ENCODE measurements at regions of chr3 and their contacts with region 1.

Region 1: DNA sequence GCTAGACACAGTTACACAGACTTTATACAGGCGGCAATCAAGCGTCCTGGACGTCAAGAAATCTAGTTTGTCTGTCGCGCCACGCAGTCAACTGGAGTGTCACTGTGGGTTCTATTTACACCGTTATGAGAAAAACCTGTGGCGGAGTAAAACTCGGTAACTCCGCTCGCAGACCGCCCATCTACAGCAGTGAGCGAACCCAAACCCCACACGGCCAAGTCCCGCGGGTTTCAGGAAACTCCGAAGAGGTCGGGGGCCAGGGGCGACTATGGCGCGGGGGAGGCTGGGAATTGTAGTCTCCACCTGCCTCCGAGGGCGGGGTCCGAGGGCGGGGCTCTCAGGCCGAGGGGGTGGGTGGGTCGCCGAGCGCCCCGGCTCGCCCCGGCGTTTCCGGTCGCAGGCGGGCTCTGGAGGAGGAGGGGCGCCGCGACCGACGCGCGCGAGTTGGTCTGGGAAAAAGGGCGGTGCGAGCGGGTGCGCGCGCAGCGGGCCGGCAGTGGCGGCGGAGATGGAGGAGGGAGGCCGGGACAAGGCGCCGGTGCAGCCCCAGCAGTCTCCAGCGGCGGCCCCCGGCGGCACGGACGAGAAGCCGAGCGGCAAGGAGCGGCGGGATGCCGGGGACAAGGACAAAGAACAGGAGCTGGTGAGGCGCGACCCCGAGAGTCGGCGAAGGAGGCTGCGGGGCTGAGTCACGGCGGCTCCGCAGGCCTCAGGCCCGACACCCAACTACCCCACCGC is at the start of gene PSMD2:
- DNase-seq: peak; percentile 96
- ATAC-seq: peak; percentile 95
- H3K4me3 ChIP-seq: peak within 1 kb of the TSS; percentile 63 to 92 (median 79)
- H3K4me3 Mint-ChIP-seq: peak within 1 kb of the TSS; percentile 95
- H3K27ac ChIP-seq: peak within 1 kb of the TSS; percentile 65 to 82
- H3K27ac Mint-ChIP-seq: peak within 1 kb of the TSS; percentile 91
- H3K4me1 ChIP-seq: peaks cover 12 to 17% of the 10 kb centered on the region in 2 donors
- H3K4me1 Mint-ChIP-seq: peaks cover 22% of the 10 kb centered on the region
- H3K27me3 ChIP-seq: peaks cover 0 to 2% (median 0%) of the 10 kb centered on the region in 4 experiments
- H3K27me3 Mint-ChIP-seq: peaks cover 6% of the 10 kb centered on the region
- CTCF ChIP-seq: no peak
- total RNA-seq, gene PSMD2: 140 and 145 TPM in 2 replicates

Region 2: GRCh38 chr3:183697610-183698317 is 601.2 kb before region 1 on chr3 and contains the start of gene YEATS2:
- CTCF ChIA-PET with region 1: no interaction called
- POLR2A ChIA-PET with region 1: no interaction called
- intact Hi-C with region 1: loop called (anchors 5 kb)
- DNase-seq: peak; percentile 82
- ATAC-seq: peak; percentile 87
- H3K4me3 ChIP-seq: peak within 1 kb of the TSS; percentile 77 to 92 (median 83)
- H3K4me3 Mint-ChIP-seq: peak within 1 kb of the TSS; percentile 97
- H3K27ac ChIP-seq: peak within 1 kb of the TSS; percentile 67 to 82
- H3K27ac Mint-ChIP-seq: peak within 1 kb of the TSS; percentile 91
- H3K4me1 ChIP-seq: peaks cover 18% of the 10 kb centered on the region in 2 donors
- H3K4me1 Mint-ChIP-seq: peaks cover 32% of the 10 kb centered on the region
- H3K27me3 ChIP-seq: no peaks in the 10 kb centered on the region
- H3K27me3 Mint-ChIP-seq: no peaks in the 10 kb centered on the region
- CTCF ChIP-seq: no peak
- total RNA-seq, gene YEATS2: 26.7 and 30.6 TPM in 2 replicates

Region 3: DNA sequence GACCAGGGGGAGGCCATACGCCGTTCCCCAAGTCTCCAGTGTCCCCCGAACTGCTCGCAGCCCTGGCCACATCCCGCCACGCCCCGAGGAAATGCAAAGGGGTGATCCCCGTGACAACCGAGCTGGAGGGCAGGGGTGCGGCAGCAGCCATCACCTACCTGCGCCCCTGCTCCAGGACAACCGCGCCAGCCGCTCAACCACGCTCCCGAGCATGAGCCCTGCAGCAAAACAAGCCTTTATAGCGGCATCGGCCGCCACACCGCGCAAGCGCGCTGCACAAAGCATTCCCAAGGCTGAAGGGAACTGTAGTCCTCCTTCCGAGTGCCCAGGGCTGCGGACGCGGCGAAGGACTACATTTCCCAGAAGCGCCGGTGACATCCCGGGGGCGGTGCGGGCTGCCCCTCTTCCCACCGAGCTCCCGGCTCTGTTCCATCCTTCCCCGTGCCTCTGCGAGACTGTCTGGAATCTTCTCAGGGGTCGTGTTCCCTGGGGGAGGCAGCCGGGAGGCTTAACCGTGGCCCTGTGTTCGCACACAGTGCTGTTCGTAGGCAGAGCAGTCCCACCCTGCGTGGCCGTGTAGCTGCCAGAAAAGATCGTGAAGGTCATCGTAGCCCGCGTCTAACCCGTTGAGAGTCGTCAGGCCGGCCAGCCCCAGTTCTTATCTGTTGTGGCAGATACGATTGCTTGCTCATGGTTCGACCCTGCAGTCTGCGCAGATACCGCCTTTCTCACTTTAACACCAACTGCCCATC is 281.1 kb before region 1 on chr3 and contains the start of gene ABCC5:
- CTCF ChIA-PET with region 1: no interaction called
- POLR2A ChIA-PET with region 1: no interaction called
- intact Hi-C with region 1: loop called (anchors 5 kb)
- DNase-seq: peak; percentile 89
- ATAC-seq: peak; percentile 96
- H3K4me3 ChIP-seq: peak within 1 kb of the TSS; percentile 73 to 99 (median 93)
- H3K4me3 Mint-ChIP-seq: peak within 1 kb of the TSS; percentile 100
- H3K27ac ChIP-seq: peak within 1 kb of the TSS in 1 of 2 donors; percentile 10
- H3K27ac Mint-ChIP-seq: peak within 1 kb of the TSS; percentile 94
- H3K4me1 ChIP-seq: peaks cover 10 to 13% of the 10 kb centered on the region in 2 donors
- H3K4me1 Mint-ChIP-seq: peaks cover 20% of the 10 kb centered on the region
- H3K27me3 ChIP-seq: no peaks in the 10 kb centered on the region
- H3K27me3 Mint-ChIP-seq: peaks cover 15% of the 10 kb centered on the region
- CTCF ChIP-seq: peak; percentile 81
- total RNA-seq, gene ABCC5: 29.5 and 31.7 TPM in 2 replicates

Region 4: DNA sequence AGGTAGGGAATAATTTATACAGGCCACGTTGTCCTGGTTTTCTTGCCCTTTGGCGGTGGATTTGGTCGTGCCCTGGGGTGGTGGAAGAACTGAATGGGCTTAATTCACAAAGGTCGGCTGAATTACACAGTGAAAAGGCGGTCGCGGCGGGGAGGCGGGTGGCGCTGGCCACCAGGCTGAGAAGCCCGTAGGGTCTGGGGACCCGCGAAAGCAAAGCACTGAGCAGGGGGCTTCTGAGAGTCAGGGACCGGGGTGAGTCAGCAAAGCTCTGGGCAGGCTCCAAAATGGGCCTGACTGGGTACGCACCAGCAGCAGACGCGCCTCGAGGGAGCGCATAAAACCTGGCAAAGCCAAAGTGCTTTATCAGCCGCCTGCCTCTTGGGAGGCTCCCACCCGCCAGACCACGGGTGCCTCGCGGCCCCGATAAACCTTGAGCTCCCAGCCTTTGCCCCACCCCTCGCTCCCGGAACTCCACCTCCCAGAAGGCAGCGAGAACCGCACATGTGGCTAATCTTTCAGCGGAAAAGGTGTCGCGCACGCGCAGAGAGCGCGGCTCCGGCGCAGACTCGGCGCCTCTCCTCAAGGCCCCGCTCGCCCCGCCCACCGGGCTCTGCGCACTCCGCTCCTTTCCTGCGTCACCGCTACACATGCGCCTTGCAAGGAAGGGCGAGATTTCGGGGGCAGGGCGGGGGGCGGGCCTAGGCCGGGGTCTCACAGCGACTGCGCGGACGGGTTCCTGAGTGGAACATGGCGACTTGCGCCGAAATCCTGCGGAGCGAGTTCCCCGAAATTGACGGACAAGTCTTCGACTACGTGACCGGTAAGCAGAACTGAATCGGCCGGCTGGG is 113.2 kb before region 1 on chr3 and contains the start of gene ABCF3:
- CTCF ChIA-PET with region 1: no interaction called
- POLR2A ChIA-PET with region 1: no interaction called
- intact Hi-C with region 1: loop called (anchors 1 kb)
- DNase-seq: peak; percentile 100
- ATAC-seq: peak; percentile 94
- H3K4me3 ChIP-seq: peak within 1 kb of the TSS; percentile 70 to 100 (median 97)
- H3K4me3 Mint-ChIP-seq: peak within 1 kb of the TSS; percentile 99
- H3K27ac ChIP-seq: peak within 1 kb of the TSS; percentile 48 to 68
- H3K27ac Mint-ChIP-seq: peak within 1 kb of the TSS; percentile 94
- H3K4me1 ChIP-seq: peaks cover 17 to 21% of the 10 kb centered on the region in 2 donors
- H3K4me1 Mint-ChIP-seq: peaks cover 33% of the 10 kb centered on the region
- H3K27me3 ChIP-seq: no peaks in the 10 kb centered on the region
- H3K27me3 Mint-ChIP-seq: no peaks in the 10 kb centered on the region
- CTCF ChIP-seq: no peak
- total RNA-seq, gene ABCF3: 115 and 131 TPM in 2 replicates

Region 5: GRCh38 chr3:184235381-184236032 is 63.4 kb before region 1 on chr3:
- CTCF ChIA-PET with region 1: no interaction called
- POLR2A ChIA-PET with region 1: no interaction called
- intact Hi-C with region 1: no loop called
- DNase-seq: no peak
- ATAC-seq: no peak
- H3K4me3 ChIP-seq: no peak overlapping the region
- H3K4me3 Mint-ChIP-seq: no peak overlapping the region
- H3K27ac ChIP-seq: no peak overlapping the region
- H3K27ac Mint-ChIP-seq: no peak overlapping the region
- H3K4me1 ChIP-seq: peaks cover 0 to 10% of the 10 kb centered on the region in 2 donors
- H3K4me1 Mint-ChIP-seq: peaks cover 9% of the 10 kb centered on the region
- H3K27me3 ChIP-seq: peaks cover 0 to 40% (median 23%) of the 10 kb centered on the region in 4 experiments
- H3K27me3 Mint-ChIP-seq: peaks cover 27% of the 10 kb centered on the region
- CTCF ChIP-seq: no peak

Region 6: GRCh38 chr3:184250167-184250828 is 48.6 kb before region 1 on chr3:
- CTCF ChIA-PET with region 1: interaction called, 4 read pairs
- POLR2A ChIA-PET with region 1: no interaction called
- intact Hi-C with region 1: loop called (anchors 1 kb)
- DNase-seq: peak; percentile 92
- ATAC-seq: peak; percentile 65
- H3K4me3 ChIP-seq: peak overlapping the region; percentile 88 to 93 (median 91)
- H3K4me3 Mint-ChIP-seq: peak overlapping the region; percentile 87
- H3K27ac ChIP-seq: peak overlapping the region in 1 of 2 donors; percentile 58
- H3K27ac Mint-ChIP-seq: peak overlapping the region; percentile 78
- H3K4me1 ChIP-seq: peaks cover 5 to 17% of the 10 kb centered on the region in 2 donors
- H3K4me1 Mint-ChIP-seq: peaks cover 9% of the 10 kb centered on the region
- H3K27me3 ChIP-seq: no peaks in the 10 kb centered on the region
- H3K27me3 Mint-ChIP-seq: no peaks in the 10 kb centered on the region
- CTCF ChIP-seq: peak; percentile 94

Region 7: DNA sequence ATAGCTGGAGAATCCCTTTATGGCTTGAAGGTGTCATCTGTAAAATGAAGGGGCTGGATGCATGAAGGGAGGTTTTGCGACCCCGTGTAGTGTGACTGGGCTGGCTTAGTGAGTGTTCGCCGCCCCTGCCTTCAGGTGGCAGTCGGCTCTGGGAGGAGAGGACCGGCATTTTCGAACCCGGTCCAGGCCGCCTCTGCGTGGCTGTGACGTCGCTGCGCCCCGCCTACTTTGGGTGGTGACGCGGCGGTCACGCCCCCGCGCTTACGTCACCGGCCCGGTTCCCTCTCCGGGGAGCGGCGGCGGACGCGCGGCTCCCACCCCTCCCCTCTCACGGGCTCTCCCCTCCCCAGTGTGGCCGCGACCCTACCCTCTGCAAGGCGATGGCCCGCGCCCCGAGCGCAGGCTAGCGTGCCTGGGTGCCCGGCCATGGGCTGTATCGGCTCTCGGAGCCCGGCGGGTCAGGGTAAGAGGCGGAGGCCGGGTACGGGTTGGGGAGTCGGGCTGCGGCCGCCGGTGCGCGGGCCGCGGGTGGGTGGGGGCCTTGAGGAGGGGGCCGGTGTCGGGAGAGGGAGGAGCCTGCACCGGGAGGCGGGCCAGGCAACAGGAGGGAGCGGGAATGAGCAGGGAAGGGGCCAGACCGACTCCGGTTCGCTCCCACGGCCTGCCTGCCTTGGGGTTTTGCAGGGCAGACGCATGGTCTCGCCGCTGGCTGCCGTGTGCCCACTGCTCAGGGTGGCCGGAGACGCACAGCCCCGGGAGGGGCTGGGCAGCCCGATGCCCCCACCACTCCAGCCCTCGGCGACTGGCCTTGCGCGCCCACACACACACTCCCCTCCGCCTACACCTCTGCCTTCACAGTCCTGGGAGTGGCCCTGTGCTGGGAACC is 37.0 kb after region 1 on chr3:
- CTCF ChIA-PET with region 1: no interaction called
- POLR2A ChIA-PET with region 1: no interaction called
- intact Hi-C with region 1: loop called (anchors 2 kb)
- DNase-seq: peak; percentile 92
- ATAC-seq: peak; percentile 80
- H3K4me3 ChIP-seq: peak overlapping the region; percentile 51 to 83 (median 73)
- H3K4me3 Mint-ChIP-seq: peak overlapping the region; percentile 94
- H3K27ac ChIP-seq: peak overlapping the region; percentile 93
- H3K27ac Mint-ChIP-seq: peak overlapping the region; percentile 90
- H3K4me1 ChIP-seq: peaks cover 14 to 25% of the 10 kb centered on the region in 2 donors
- H3K4me1 Mint-ChIP-seq: peaks cover 30% of the 10 kb centered on the region
- H3K27me3 ChIP-seq: peaks cover 0 to 3% (median 0%) of the 10 kb centered on the region in 4 experiments
- H3K27me3 Mint-ChIP-seq: no peaks in the 10 kb centered on the region
- CTCF ChIP-seq: no peak

Region 8: GRCh38 chr3:184727357-184728009 is 428.6 kb after region 1 on chr3:
- CTCF ChIA-PET with region 1: no interaction called
- POLR2A ChIA-PET with region 1: no interaction called
- intact Hi-C with region 1: no loop called
- DNase-seq: peak; percentile 74
- ATAC-seq: peak; percentile 63
- H3K4me3 ChIP-seq: no peak overlapping the region
- H3K4me3 Mint-ChIP-seq: no peak overlapping the region
- H3K27ac ChIP-seq: no peak overlapping the region
- H3K27ac Mint-ChIP-seq: no peak overlapping the region
- H3K4me1 ChIP-seq: no peaks in the 10 kb centered on the region
- H3K4me1 Mint-ChIP-seq: no peaks in the 10 kb centered on the region
- H3K27me3 ChIP-seq: peaks cover 0 to 5% (median 0%) of the 10 kb centered on the region in 4 experiments
- H3K27me3 Mint-ChIP-seq: peaks cover 13% of the 10 kb centered on the region
- CTCF ChIP-seq: peak; percentile 74

Measured in B cell (primary cell).